Breast epithelium (tissue), 4 donors: ENCODE measurements at regions of chr6 and their contacts with region 1.

Region 1: GRCh38 chr6:14876778-14877613 is 368.9 kb upstream of the JARID2 start:
- DNase-seq: no peak
- H3K4me3 ChIP-seq: no peak overlapping the region
- H3K27ac ChIP-seq: peak overlapping the region in 1 of 2 donors; percentile 55
- H3K4me1 ChIP-seq: no peaks in the 10 kb centered on the region
- H3K27me3 ChIP-seq: no peaks in the 10 kb centered on the region
- CTCF ChIP-seq: no peak
- POLR2A ChIP-seq: no peak

Region 2: DNA sequence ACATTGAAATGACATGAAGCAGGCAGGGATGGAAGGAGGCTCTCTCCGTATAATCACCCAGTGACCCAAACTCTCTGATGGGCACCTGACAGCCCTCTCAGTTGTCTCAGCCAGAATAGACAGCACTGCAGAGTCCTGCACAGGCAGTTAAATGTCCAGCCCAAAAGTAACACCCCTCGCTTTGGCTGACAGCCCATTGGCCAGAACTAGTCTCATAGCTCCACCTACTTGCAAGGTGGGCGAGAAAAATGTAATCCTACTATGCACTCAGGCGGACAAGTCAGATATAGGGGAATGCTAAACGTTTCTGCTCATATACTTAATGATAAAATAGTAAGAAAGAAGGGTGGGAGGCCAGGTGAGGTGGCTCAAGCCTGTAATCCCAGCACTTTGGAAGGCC is 24.6 kb before region 1 on chr6:
- intact Hi-C with region 1: loop called (anchors 1 kb)
- DNase-seq: no peak
- H3K4me3 ChIP-seq: no peak overlapping the region
- H3K27ac ChIP-seq: no peak overlapping the region
- H3K4me1 ChIP-seq: no peaks in the 10 kb centered on the region
- H3K27me3 ChIP-seq: no peaks in the 10 kb centered on the region
- CTCF ChIP-seq: no peak
- POLR2A ChIP-seq: no peak

Region 3: DNA sequence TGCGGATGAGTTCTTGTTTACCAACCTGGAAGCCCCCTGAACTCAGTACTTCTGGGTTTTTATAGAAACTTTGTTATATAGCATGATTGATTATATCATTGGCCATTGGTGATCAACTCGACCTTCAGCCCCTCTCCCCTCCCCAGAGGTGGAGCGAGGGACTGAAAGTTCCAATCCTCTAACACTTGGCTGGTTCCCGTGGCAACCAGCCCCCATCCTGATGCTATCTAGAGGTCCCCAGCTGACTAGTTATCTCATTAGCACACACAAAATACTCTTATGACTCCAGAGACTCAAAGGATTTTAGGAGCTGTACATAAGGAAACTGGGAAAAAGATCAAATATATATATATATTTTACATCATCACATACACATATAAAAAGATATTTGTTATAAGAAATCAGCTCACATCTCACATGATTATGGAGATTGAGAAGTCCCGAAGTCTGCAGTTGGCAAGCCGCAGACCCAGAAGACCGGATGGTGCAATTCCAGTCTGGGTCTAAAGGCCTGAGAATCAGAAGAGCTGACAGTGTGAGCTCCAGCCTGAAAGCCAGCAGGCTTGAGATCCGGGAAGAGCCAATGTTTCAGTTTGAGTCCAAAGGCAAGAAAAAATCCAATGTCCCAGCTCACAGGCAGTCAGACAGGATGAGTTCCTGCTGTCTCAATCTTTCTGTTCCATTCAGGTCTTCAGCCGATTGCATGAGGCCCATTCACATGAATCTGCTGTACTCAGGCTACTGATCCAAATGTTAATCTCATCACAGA is 965.1 kb after region 1 on chr6:
- intact Hi-C with region 1: no loop called
- DNase-seq: no peak
- H3K4me3 ChIP-seq: no peak overlapping the region
- H3K27ac ChIP-seq: no peak overlapping the region
- H3K4me1 ChIP-seq: no peaks in the 10 kb centered on the region
- H3K27me3 ChIP-seq: no peaks in the 10 kb centered on the region
- CTCF ChIP-seq: no peak
- POLR2A ChIP-seq: no peak